Heart right ventricle (tissue), 16 donors: ENCODE measurements at regions of chr20 and their contacts with region 1.

Region 1: DNA sequence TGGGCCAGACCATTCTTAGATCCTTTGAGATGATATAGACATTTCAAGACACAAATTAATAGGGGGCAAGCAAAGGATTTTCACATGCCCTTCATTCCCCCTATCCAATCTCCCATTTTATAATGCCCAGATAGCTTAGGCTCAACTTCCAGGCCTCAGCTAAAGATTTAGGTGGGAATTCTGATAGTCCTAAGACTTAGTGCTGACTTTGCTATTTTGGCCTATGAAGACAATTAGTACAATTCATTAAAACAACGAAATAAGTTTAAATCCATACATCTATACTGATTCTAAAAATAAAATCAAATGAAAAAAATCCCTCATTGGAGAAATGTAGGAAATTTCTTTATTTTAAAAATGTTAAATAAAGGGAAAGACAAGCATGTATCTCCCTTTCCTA is 259.5 kb downstream of the CBLN4 start:
- DNase-seq: no peak
- ATAC-seq: no peak
- H3K4me3 ChIP-seq: no peak overlapping the region
- H3K27ac ChIP-seq: no peak overlapping the region
- H3K4me1 ChIP-seq: no peaks in the 10 kb centered on the region
- H3K27me3 ChIP-seq: no peaks in the 10 kb centered on the region
- CTCF ChIP-seq: no peak

Region 2: GRCh38 chr20:54897515-54898186 is 848.2 kb before region 1 on chr20:
- intact Hi-C with region 1: loop called in 1 of 10 experiments (anchors 2 kb)
- DNase-seq: no peak
- ATAC-seq: no peak
- H3K4me3 ChIP-seq: no peak overlapping the region
- H3K27ac ChIP-seq: no peak overlapping the region
- H3K4me1 ChIP-seq: no peaks in the 10 kb centered on the region
- H3K27me3 ChIP-seq: no peaks in the 10 kb centered on the region
- CTCF ChIP-seq: no peak

Region 3: GRCh38 chr20:55472699-55473098 is 273.1 kb before region 1 on chr20:
- intact Hi-C with region 1: no loop called
- DNase-seq: no peak
- ATAC-seq: no peak
- H3K4me3 ChIP-seq: no peak overlapping the region
- H3K27ac ChIP-seq: no peak overlapping the region
- H3K4me1 ChIP-seq: no peaks in the 10 kb centered on the region
- H3K27me3 ChIP-seq: no peaks in the 10 kb centered on the region
- CTCF ChIP-seq: no peak

Region 4: DNA sequence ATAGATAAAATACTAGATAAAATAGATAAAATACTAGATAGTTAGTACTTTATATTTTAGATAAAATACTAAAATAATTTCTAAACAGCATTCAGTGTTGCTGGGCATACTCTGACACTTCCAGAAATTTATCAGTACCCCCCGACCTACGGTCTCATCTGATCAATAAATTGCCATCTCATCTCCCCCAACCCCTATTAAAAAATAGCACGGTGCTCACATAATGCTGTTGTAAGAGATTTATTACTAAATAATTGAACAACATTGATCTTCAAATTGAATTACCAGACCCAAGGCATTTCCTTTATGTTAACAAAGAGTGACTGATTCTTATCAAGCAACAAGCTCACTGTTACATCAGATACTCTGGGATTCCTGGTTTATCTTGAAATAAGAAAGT is 41.4 kb before region 1 on chr20:
- intact Hi-C with region 1: no loop called
- DNase-seq: no peak
- ATAC-seq: no peak
- H3K4me3 ChIP-seq: no peak overlapping the region
- H3K27ac ChIP-seq: no peak overlapping the region
- H3K4me1 ChIP-seq: no peaks in the 10 kb centered on the region
- H3K27me3 ChIP-seq: no peaks in the 10 kb centered on the region
- CTCF ChIP-seq: no peak

Region 5: GRCh38 chr20:55730321-55730720 is 15.5 kb before region 1 on chr20:
- intact Hi-C with region 1: no loop called
- DNase-seq: no peak
- ATAC-seq: no peak
- H3K4me3 ChIP-seq: no peak overlapping the region
- H3K27ac ChIP-seq: no peak overlapping the region
- H3K4me1 ChIP-seq: no peaks in the 10 kb centered on the region
- H3K27me3 ChIP-seq: peaks cover 0 to under 1% (median 0%) of the 10 kb centered on the region in 7 donors
- CTCF ChIP-seq: no peak

Region 6: DNA sequence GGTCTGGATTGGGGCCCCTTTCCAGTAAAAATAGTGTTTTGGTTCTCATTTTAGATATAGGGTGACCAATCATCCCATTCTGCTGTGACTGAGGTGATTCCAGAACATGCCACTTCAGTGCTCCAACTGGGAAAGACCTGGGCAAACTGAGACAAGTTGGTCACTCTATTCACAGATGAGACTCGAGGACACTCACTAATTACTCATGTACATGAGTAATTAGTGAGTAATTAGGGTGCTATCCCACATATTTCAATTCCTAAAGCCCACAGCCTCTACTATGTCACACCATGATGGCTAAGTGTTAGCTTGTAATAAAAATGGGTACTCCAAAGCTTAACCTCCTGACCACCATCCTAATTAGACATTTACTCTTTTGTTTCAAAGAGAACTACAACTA is 173.5 kb after region 1 on chr20:
- intact Hi-C with region 1: no loop called
- DNase-seq: no peak
- ATAC-seq: no peak
- H3K4me3 ChIP-seq: no peak overlapping the region
- H3K27ac ChIP-seq: no peak overlapping the region
- H3K4me1 ChIP-seq: no peaks in the 10 kb centered on the region
- H3K27me3 ChIP-seq: no peaks in the 10 kb centered on the region
- CTCF ChIP-seq: no peak